Common myeloid progenitor, CD34-positive (primary cell): ENCODE measurements at regions of chr16 and their contacts with region 1.

Region 1: GRCh38 chr16:85554112-85554813 is 58.9 kb upstream of the GSE1 start:
- DNase-seq: peak; percentile 91 to 97 (median 96)
- H3K4me3 ChIP-seq: peak overlapping the region; percentile 40 to 97 (median 84)
- H3K27ac ChIP-seq: peak overlapping the region; percentile 95 to 98
- H3K4me1 ChIP-seq: peaks cover 5 to 41% (median 33%) of the 10 kb centered on the region in 4 experiments
- H3K27me3 ChIP-seq: no peaks in the 10 kb centered on the region

Region 2: GRCh38 chr16:85491058-85491771 is 63.0 kb before region 1 on chr16:
- CTCF ChIA-PET with region 1: interaction called, 29 read pairs
- POLR2A ChIA-PET with region 1: interaction called, 6 read pairs
- DNase-seq: peak; percentile 33 to 55 (median 34)
- H3K4me3 ChIP-seq: no peak overlapping the region
- H3K27ac ChIP-seq: no peak overlapping the region
- H3K4me1 ChIP-seq: peaks cover 0 to 37% (median 16%) of the 10 kb centered on the region in 4 experiments
- H3K27me3 ChIP-seq: no peaks in the 10 kb centered on the region

Region 3: DNA sequence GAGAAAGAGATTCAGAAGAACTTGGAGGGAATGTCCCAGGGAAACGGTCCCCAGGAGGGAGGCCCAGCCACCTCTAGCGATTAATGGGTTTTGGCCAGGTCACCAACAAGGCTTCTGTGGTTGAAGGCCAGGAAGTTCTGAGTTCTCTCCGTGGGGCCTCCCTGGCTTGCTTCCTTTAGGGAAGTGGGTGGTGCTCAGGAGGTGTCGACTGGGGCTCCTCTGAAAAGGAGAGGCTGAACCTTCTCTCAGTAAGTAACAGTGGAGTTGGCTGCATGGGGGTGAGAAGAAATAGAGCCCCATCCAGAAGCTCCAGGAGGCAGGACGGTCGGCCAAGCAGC is 18.2 kb before region 1 on chr16:
- CTCF ChIA-PET with region 1: interaction called, 62 read pairs
- POLR2A ChIA-PET with region 1: interaction called, 14 read pairs
- DNase-seq: peak; percentile 51 to 78 (median 67)
- H3K4me3 ChIP-seq: peak overlapping the region in 4 of 7 experiments; percentile 30 to 59 (median 56)
- H3K27ac ChIP-seq: peak overlapping the region; percentile 6 to 90
- H3K4me1 ChIP-seq: peaks cover 4 to 48% (median 46%) of the 10 kb centered on the region in 4 experiments
- H3K27me3 ChIP-seq: no peaks in the 10 kb centered on the region

Region 4: GRCh38 chr16:85564277-85565051 is 10.2 kb after region 1 on chr16:
- CTCF ChIA-PET with region 1: interaction called, 35 read pairs
- POLR2A ChIA-PET with region 1: interaction called, 10 read pairs
- DNase-seq: peak; percentile 63 to 72 (median 68)
- H3K4me3 ChIP-seq: no peak overlapping the region
- H3K27ac ChIP-seq: no peak overlapping the region
- H3K4me1 ChIP-seq: peaks cover 0 to 88% (median 81%) of the 10 kb centered on the region in 4 experiments
- H3K27me3 ChIP-seq: no peaks in the 10 kb centered on the region

Region 5: DNA sequence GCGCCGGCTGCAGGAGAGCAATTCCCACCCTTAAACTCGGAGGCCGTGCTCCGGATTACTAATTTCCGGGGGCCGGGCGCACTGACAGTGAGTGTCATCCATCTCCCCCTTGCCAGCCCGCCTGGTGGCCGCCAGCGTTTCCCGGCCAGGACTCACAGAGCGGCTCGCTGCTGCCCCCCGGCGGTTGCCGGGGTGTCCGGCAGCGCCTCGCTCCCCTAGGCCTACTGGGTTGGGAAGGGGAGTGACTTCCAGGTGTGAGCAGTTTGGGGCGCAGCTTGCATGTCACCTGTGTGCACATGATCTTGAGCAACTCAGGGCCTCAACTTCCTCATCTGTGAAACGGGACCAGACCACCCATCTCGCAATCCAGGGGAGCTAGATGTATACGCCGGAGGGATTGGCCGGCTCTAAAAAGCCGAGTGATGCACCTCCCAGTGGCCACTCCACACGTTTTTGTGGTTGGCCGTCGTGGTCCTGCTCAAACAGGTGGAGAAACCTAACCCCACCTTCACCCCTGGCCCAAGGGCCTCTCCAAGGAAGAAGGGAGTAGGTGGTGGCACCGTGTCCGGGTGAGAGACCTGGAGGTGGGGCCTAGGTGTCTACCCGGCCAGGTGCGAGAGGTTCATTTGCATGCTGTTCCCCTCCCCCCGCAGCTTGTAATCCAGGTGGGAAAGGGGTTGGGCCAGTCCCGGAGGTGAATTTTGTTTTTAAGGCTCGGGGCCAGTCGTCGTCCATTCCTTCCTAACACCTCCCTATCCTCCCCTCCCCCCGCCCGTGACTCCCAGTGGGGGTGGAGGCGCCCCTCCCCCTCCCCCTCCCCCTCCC is 56.5 kb after region 1 on chr16:
- CTCF ChIA-PET with region 1: interaction called, 22 read pairs
- POLR2A ChIA-PET with region 1: interaction called, 26 read pairs
- DNase-seq: peak; percentile 84 to 88 (median 86)
- H3K4me3 ChIP-seq: peak overlapping the region in 5 of 7 experiments; percentile 36 to 85 (median 65)
- H3K27ac ChIP-seq: peak overlapping the region; percentile 23 to 71
- H3K4me1 ChIP-seq: peaks cover 3 to 73% (median 60%) of the 10 kb centered on the region in 4 experiments
- H3K27me3 ChIP-seq: no peaks in the 10 kb centered on the region